ENCODE measurements at regions of chr1 and their contacts with region 1.

Region 1: DNA sequence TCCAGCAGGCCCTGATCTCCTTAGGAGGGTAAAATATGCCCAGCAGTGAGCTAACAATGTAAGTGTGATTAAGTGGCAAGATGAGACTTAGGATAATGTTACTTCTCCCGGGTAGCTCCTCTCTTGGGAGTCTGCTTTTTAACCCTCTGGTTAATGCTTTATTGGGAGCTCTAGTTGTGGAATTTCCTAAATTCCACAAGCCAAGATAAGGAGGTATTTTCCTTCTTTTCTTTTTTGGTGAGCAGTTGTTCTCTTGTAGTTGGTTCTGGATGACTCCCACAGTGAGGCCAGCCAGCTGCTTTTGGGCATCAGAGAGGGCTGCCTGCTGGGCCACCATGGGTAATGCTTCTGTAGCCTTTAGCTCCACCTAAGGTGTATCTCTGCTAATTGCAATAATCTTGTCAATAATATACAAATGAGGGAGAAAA is 19.3 kb downstream of the C1orf52 start:
- DNase-seq: peak; percentile 48
- ATAC-seq: peak; percentile 84
- H3K4me3 Mint-ChIP-seq: no peak overlapping the region
- H3K27ac Mint-ChIP-seq: no peak overlapping the region
- H3K4me1 Mint-ChIP-seq: peaks cover 14% of the 10 kb centered on the region
- H3K27me3 Mint-ChIP-seq: peaks cover 3% of the 10 kb centered on the region

Region 2: GRCh38 chr1:85109475-85109874 is 130.7 kb before region 1 on chr1:
- CTCF ChIA-PET with region 1: interaction called, 19 read pairs
- DNase-seq: peak; percentile 58
- ATAC-seq: peak; percentile 82
- H3K4me3 Mint-ChIP-seq: no peak overlapping the region
- H3K27ac Mint-ChIP-seq: no peak overlapping the region
- H3K4me1 Mint-ChIP-seq: no peaks in the 10 kb centered on the region
- H3K27me3 Mint-ChIP-seq: peaks cover 2% of the 10 kb centered on the region

Region 3: DNA sequence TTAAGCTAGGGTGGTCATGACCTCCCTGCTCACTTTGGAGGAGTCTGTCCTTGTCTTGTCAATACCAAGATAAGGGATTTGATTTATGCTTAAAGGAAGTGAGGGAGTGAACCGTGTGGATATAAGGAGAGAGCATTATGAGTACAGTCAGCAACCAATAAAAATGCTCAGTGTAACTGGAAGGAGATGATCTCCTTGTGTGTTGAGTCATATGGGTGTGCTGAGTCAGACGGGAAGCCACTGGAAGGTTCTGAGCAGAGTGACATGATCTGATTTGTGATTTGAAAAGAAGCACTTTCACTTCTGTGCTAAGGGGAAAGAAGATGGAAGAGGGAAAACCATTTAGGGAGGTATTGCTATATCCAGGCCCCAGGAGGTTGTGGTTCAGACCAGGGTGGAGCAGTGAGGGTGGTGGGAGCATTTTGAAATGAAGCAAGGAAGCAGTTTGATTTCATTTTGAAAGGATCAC is 38.7 kb after region 1 on chr1:
- CTCF ChIA-PET with region 1: no interaction called
- DNase-seq: peak; percentile 70
- ATAC-seq: no peak
- H3K4me3 Mint-ChIP-seq: no peak overlapping the region
- H3K27ac Mint-ChIP-seq: no peak overlapping the region
- H3K4me1 Mint-ChIP-seq: peaks cover 37% of the 10 kb centered on the region
- H3K27me3 Mint-ChIP-seq: peaks cover 45% of the 10 kb centered on the region